GM12878 (cell line): ENCODE measurements at regions of chr10 and their contacts with region 1.

Region 1: GRCh38 chr10:3867454-3868270 is 82.7 kb upstream of the KLF6 start:
- DNase-seq: no peak
- ATAC-seq: no peak
- H3K4me3 ChIP-seq: no peak overlapping the region
- H3K27ac ChIP-seq: no peak overlapping the region
- H3K4me1 ChIP-seq: peaks cover 39% of the 10 kb centered on the region
- H3K27me3 ChIP-seq: no peaks in the 10 kb centered on the region
- CTCF ChIP-seq: no peak
- EP300 ChIP-seq: no peak
- POLR2A ChIP-seq: no peak
- RAD21 ChIP-seq: no peak

Region 2: DNA sequence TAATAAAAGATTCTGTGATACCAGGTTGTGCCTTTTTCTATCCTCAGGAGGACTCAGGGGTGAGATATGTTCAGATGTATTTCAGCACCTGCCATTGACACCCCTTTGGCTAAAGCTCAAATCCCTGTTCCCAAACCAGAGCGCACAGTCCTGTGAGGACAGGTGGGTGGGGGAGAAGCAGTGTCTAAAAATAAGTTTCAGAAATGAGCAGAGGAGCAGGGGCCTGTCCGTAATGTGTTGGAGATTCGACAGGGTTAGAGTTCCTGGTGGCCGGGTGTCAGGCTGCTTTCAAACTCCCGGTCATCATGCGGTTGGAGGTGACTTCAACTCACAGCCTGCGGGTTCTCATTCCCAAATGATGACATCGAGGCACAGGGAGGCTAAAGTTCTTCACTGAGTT is 294.2 kb before region 1 on chr10:
- CTCF ChIA-PET with region 1: no interaction called
- POLR2A ChIA-PET with region 1: no interaction called
- RAD21 ChIA-PET with region 1: no interaction called
- SMC1A ChIA-PET with region 1: no interaction called
- in situ Hi-C with region 1: no loop called
- intact Hi-C with region 1: no loop called
- DNase-seq: no peak
- ATAC-seq: no peak
- H3K4me3 ChIP-seq: no peak overlapping the region
- H3K27ac ChIP-seq: no peak overlapping the region
- H3K4me1 ChIP-seq: no peaks in the 10 kb centered on the region
- H3K27me3 ChIP-seq: no peaks in the 10 kb centered on the region
- CTCF ChIP-seq: no peak
- EP300 ChIP-seq: no peak
- POLR2A ChIP-seq: no peak
- RAD21 ChIP-seq: no peak

Region 3: GRCh38 chr10:3811291-3811870 is 56.3 kb before region 1 on chr10:
- CTCF ChIA-PET with region 1: interaction called, 5 read pairs
- POLR2A ChIA-PET with region 1: interaction called, 6 read pairs
- RAD21 ChIA-PET with region 1: interaction called, 22 read pairs
- SMC1A ChIA-PET with region 1: interaction called, 27 read pairs
- in situ Hi-C with region 1: no loop called
- intact Hi-C with region 1: no loop called
- DNase-seq: peak; percentile 76
- ATAC-seq: peak; percentile 87
- H3K4me3 ChIP-seq: peak overlapping the region; percentile 55; the same call in 1 of the 2 replicates
- H3K27ac ChIP-seq: peak overlapping the region; percentile 82
- H3K4me1 ChIP-seq: peaks cover 42% of the 10 kb centered on the region
- H3K27me3 ChIP-seq: no peaks in the 10 kb centered on the region
- CTCF ChIP-seq: no peak
- EP300 ChIP-seq: peak; percentile 62 to 69; a peak in 3 of 4 replicates
- POLR2A ChIP-seq: peak; percentile 24; the same call in 1 of the 2 replicates
- RAD21 ChIP-seq: peak; percentile 26; the same call in 1 of the 2 replicates

Region 4: DNA sequence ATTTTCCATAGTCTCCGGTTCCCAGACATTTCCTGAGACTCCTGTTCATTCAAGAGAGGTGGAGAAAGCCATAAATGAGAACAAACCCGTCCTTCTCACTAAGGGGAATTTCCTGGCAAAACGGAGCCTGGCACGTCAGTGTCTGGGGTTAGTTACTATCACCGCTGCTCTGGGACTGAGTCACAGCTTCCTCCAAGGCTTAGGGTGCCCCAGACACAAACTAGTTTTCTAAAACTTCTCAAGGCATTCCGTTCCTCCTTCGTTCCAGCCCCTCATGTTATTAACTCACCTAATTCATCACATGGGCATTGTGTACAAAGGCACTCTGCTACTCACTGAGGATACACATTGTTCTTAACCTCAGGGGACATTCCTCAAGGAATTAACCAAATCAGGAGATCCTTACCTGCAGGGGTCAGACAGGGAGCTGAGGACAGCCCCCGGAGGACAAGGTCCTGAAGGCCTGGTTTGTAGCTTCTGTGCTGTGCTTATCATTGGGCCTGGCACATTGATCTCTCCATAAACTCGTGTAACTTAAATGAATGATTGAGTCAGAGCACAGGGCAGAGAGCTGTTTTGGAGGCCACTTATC is 20.3 kb after region 1 on chr10:
- CTCF ChIA-PET with region 1: no interaction called
- POLR2A ChIA-PET with region 1: interaction called, 4 read pairs
- RAD21 ChIA-PET with region 1: interaction called, 13 read pairs
- SMC1A ChIA-PET with region 1: interaction called, 188 read pairs
- in situ Hi-C with region 1: no loop called
- intact Hi-C with region 1: no loop called
- DNase-seq: peak; percentile 66
- ATAC-seq: peak; percentile 92
- H3K4me3 ChIP-seq: no peak overlapping the region
- H3K27ac ChIP-seq: peak overlapping the region; percentile 67
- H3K4me1 ChIP-seq: peaks cover 15% of the 10 kb centered on the region
- H3K27me3 ChIP-seq: no peaks in the 10 kb centered on the region
- CTCF ChIP-seq: no peak
- EP300 ChIP-seq: peak in 1 of 2 experiments; percentile 54; a peak in 2 of 4 replicates
- POLR2A ChIP-seq: no peak
- RAD21 ChIP-seq: 0 out of 2 replicates have a peak, but pooled peaks have one; percentile 0

Region 5: DNA sequence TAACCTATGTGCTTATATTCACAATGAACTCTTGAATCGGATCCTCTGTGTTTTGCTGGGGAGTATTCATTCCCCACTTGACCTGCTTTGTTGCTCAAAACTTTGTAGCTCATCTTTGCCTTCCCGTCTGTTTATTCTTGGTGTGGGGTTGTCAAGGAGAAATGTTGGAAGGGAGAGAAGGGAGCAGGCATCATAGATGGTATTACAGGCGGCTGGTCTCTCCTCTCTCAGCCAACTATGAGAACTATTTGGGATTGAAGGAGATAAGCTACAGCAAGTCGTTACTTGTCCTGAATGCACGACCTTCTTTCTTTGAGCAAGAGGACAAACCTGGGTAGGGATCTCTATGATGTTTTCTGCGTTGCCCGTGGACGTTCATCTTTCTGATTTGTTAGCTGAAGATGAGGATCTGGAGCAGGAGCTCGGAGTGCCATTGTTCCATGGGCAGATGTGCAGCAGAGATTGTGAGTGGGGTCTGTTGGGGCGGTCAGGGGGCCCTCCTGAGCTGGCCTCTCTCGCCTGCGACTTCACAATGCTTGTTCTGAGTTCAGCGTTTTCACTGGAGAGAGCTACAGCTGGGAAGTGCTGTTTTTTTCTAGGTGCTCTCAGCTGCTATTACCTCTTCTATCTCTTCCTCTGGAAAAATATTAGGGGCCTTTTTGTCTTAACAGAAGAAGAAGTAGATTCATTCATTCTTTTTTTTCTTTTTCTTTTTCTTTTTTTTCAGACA is 44.2 kb after region 1 on chr10:
- CTCF ChIA-PET with region 1: no interaction called
- POLR2A ChIA-PET with region 1: no interaction called
- RAD21 ChIA-PET with region 1: no interaction called
- SMC1A ChIA-PET with region 1: no interaction called
- in situ Hi-C with region 1: no loop called
- intact Hi-C with region 1: no loop called
- DNase-seq: no peak
- ATAC-seq: no peak
- H3K4me3 ChIP-seq: no peak overlapping the region
- H3K27ac ChIP-seq: no peak overlapping the region
- H3K4me1 ChIP-seq: no peaks in the 10 kb centered on the region
- H3K27me3 ChIP-seq: no peaks in the 10 kb centered on the region
- CTCF ChIP-seq: no peak
- EP300 ChIP-seq: no peak
- POLR2A ChIP-seq: no peak
- RAD21 ChIP-seq: no peak